ENCODE measurements at regions of chr5 and their contacts with region 1.

Region 1: DNA sequence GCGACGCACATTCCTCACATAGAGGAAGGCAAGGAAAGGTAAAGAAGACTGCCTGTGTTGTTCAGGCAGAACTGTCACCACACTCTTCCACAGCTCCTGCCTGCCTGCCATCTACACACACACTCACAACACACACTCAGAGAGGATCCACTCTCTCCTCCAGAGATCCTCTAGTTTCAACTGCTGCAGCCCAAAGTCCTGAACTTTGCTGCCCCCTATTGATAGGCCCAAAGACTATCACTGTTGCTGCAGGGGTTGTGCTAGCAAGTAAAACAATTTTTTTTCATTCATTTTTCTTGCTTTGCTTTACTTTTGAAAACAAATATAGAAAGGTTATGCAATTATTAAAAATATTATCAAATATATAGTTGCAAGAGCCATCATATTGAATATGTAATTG is 5.9 kb upstream of the CFAP90 start:
- DNase-seq: peak in 2 of 5 donors; percentile 8 to 26
- ATAC-seq: peak in 2 of 4 donors; percentile 74 to 81
- H3K4me3 ChIP-seq: no peak overlapping the region
- H3K27ac ChIP-seq: no peak overlapping the region
- H3K4me1 ChIP-seq: peaks cover 0 to 4% (median 0%) of the 10 kb centered on the region in 12 donors
- H3K27me3 ChIP-seq: no peaks in the 10 kb centered on the region
- CTCF ChIP-seq: peak; percentile 41 to 71 (median 62)
- POLR2A ChIP-seq: no peak

Region 2: GRCh38 chr5:7391814-7392692 is 464.8 kb before region 1 on chr5:
- intact Hi-C with region 1: loop called in 1 of 10 experiments (anchors 5 kb)
- DNase-seq: no peak
- ATAC-seq: peak in 2 of 4 donors; percentile 35 to 54
- H3K4me3 ChIP-seq: no peak overlapping the region
- H3K27ac ChIP-seq: no peak overlapping the region
- H3K4me1 ChIP-seq: peaks cover 0 to 19% (median 0%) of the 10 kb centered on the region in 12 donors
- H3K27me3 ChIP-seq: peaks cover 6 to 30% (median 19%) of the 10 kb centered on the region in 9 donors
- CTCF ChIP-seq: peak in 11 of 12 donors; percentile 10 to 62 (median 47)
- POLR2A ChIP-seq: no peak